ENCODE measurements at regions of chr2 and their contacts with region 1.

Region 1: GRCh38 chr2:55175254-55176025 is 56.7 kb downstream of the CLHC1 start:
- DNase-seq: no peak
- H3K4me3 ChIP-seq: no peak overlapping the region
- H3K27ac ChIP-seq: no peak overlapping the region
- H3K27me3 ChIP-seq: no peaks in the 10 kb centered on the region
- CTCF ChIP-seq: peak; percentile 72

Region 2: DNA sequence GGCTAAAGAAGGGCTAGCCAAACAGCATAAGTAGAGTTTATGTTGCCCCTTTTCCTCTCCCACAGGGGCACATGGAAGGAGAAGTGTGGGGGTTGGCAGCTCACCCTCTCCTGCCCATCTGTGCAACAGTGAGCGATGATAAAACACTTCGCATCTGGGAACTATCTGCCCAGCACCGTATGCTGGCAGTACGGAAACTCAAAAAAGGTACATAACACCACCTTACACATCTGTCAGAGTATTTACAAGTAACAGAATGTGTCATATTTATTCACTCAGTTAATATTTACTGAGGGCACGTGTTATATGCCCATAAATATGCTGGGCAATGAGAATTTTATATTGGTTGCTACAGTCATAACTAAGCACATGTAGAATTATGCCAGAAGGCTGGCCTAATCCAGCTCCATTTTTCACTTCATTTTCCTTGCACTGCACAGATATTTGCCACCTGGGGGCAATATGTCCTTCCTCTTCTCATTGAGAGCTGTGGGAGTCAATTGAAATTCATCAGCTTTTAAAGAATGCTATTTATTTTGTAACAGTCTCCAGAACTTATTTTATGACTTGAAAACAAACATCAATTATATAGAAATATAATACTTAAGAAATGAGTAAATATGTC is 275.8 kb before region 1 on chr2:
- CTCF ChIA-PET with region 1: interaction called, 91 read pairs
- POLR2A ChIA-PET with region 1: no interaction called
- DNase-seq: peak; percentile 18
- H3K4me3 ChIP-seq: no peak overlapping the region
- H3K27ac ChIP-seq: no peak overlapping the region
- H3K27me3 ChIP-seq: no peaks in the 10 kb centered on the region
- CTCF ChIP-seq: peak; percentile 73

Region 3: DNA sequence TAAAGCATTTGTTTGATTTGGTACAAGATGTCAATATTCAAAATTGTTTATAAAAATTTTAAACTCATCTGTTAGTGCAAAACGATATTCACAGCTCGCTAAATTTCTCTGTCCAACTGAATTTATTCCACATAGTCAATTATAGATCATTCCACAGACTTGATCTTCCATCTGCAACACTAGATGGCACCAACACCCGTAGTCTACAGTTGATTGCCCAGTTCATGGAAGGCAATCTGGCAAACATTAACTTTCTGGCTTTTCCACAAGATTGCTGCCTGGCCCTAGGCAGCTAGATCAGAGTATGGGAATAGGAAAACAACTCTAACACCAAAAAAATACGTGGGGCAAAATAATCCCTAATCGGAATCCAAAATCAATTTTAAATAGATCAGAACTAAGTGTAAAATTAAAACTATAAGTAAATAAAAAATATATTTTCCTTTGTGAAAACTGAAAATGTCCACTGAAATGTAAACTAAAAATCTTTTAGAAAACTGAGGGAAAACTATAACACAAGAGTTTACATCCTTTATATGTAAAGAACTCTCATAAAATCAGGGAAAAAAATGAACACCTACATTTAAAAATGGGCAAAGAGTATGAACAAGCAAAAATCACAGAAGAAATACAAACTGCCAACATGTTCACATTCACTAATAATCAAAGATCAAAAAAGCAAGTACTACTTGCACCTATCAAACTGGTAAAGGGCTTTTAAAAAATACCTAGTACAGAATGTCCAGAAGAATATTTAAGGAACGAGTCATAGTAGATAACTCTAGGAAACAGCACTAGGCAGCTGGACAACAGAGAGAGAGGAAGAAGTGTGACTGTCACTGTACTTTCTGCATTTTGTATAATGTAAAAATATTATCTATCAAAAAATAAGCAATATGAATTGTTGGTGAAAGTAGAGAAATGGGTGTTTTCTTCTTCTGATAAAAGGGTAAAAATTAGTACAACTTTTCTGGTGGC is 160.2 kb before region 1 on chr2:
- CTCF ChIA-PET with region 1: interaction called, 39 read pairs
- POLR2A ChIA-PET with region 1: no interaction called
- DNase-seq: peak; percentile 21
- H3K4me3 ChIP-seq: no peak overlapping the region
- H3K27ac ChIP-seq: no peak overlapping the region
- H3K27me3 ChIP-seq: no peaks in the 10 kb centered on the region
- CTCF ChIP-seq: peak; percentile 61

Region 4: DNA sequence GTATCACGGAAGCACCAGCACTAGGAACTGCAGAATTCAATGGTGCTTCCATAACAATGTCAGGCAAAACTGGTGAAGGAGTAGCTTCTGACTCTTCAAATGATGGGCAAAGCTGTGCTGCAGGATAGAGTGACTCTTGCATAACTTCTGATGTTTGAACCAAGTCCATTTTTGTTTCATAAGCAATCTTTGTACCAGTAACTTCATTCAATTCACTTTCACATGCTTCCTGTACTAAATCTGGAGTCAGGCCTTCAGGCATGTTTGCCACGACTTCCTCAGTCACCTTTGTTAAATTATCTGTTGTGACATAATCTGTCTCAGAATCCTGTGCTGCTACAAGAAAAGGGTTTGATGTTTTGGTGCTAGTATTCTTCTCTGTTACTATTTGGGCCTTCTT is 149.2 kb before region 1 on chr2:
- CTCF ChIA-PET with region 1: interaction called, 11 read pairs
- POLR2A ChIA-PET with region 1: no interaction called
- DNase-seq: no peak
- H3K4me3 ChIP-seq: no peak overlapping the region
- H3K27ac ChIP-seq: no peak overlapping the region
- H3K27me3 ChIP-seq: no peaks in the 10 kb centered on the region
- CTCF ChIP-seq: no peak

Measured in AG04450 (cell line).